Motor neuron (in vitro differentiated cells): ENCODE measurements at regions of chr6 and their contacts with region 1.

Region 1: GRCh38 chr6:136792410-136793262 is at the start of gene MAP3K5:
- ATAC-seq: peak; percentile 69 to 87 (median 84)
- H3K4me3 ChIP-seq: peak within 1 kb of the TSS; percentile 41 to 71 (median 55)
- H3K27ac ChIP-seq: peak within 1 kb of the TSS; percentile 2 to 20
- H3K4me1 ChIP-seq: no peaks in the 10 kb centered on the region
- total RNA-seq, gene MAP3K5: 0.58 to 6.6 (median 1.2) TPM

Region 2: DNA sequence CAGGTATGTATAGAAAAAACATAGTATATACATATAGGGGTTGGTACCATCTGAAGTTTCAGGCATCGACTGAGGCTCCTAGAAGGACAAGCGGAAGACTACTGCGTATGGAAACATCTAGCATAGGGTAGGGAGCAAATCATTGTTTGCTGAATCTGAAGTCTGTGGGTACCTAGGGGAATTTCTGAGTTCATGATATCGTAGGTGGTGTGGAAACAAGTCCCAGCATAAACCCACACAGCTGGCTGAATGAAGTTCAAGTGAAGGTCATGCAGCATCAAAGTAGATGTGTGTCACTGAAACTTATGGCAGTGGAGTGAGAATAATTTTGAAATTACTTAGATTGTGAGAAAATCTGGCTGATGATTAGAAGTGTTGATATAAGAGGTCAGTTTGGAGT is 281.9 kb before region 1 on chr6:
- in situ Hi-C with region 1: no loop called
- ATAC-seq: no peak
- H3K4me3 ChIP-seq: no peak overlapping the region
- H3K27ac ChIP-seq: no peak overlapping the region
- H3K4me1 ChIP-seq: no peaks in the 10 kb centered on the region

Region 3: DNA sequence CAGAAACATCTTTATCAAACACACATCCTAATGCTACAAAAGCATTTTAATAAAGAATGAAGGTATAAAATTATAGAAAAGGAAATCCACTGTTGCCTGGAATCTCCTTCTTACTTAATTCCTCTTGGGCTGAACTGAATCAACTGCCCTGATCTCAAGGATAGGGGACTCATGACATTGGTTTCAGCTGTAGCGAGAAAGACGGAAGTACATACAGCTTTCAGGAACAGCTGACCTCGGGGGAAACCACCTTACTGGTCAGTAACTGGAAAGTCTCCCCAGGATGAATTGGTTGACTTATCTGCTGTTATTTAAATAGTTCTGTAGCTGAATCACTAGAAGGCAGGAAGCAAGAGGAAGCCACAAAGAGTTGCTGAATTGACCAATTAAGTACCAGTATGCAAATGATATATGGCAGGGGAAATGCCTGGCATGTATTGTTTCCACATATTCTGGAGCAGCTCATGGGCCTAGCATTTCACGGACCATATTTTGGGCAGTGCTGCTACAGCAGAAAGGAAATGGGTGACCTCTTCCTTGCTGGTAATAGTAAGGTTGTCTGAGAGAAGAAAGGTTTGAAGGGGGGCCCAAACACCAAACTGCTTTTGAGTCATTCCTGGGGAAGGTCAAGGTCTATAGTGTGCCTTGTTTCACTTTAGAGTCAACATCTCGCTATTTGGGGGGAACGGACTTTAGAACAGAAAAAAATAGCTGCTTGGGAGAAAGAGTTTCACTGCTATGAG is 198.7 kb before region 1 on chr6:
- in situ Hi-C with region 1: loop called in 1 of 9 experiments (anchors 25 kb)
- ATAC-seq: peak in 3 of 8 experiments; percentile 62 to 98 (median 97)
- H3K4me3 ChIP-seq: no peak overlapping the region
- H3K27ac ChIP-seq: no peak overlapping the region
- H3K4me1 ChIP-seq: no peaks in the 10 kb centered on the region

Region 4: DNA sequence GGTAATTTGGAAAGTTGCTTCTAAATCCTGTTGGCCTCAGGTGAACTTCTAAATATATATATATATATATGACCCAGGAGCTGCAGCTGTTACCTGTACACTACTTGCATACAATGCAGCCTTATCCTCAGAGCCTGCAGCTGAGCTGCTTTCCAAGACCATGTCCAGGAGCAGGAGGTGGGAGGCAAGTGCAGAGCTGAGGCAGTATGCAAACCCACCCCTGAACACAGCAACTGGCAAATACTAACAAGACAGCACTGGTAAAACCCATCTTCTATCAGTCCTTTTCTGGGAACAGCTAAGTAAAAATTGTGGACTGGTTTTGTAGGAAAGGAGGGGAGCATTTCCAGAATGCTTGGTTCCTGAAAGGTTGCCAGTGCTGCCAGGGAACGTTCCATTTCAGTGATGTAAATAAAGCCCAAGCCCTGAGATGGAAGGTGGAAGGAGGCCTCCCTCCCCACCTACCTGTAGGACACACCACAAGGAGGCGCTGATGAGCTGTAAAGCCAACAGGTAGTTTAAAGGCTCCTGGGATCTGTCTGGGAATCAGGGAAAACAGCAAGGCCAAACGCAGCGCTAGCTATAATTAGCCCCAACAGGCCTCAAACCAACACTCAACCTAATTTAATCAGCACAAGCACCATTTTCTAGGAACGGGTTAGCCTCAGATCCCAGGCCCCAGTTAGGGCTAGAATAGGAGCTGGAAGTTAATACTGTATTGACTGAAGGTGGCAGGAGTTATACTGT is 148.6 kb before region 1 on chr6:
- in situ Hi-C with region 1: loop called in 3 of 9 experiments (anchors 10 kb)
- ATAC-seq: peak; percentile 65 to 100 (median 90)
- H3K4me3 ChIP-seq: peak overlapping the region in 1 of 5 donors; percentile 2
- H3K27ac ChIP-seq: no peak overlapping the region
- H3K4me1 ChIP-seq: no peaks in the 10 kb centered on the region